GM12878 (cell line): ENCODE measurements at regions of chr21 and their contacts with region 1.

Region 1: GRCh38 chr21:14602382-14602958 is 56.4 kb upstream of the SAMSN1 start:
- DNase-seq: no peak
- ATAC-seq: peak; percentile 90
- H3K4me3 ChIP-seq: peak overlapping the region; percentile 18; the same call in 1 of the 2 replicates
- H3K27ac ChIP-seq: no peak overlapping the region
- H3K4me1 ChIP-seq: peaks cover 3% of the 10 kb centered on the region; the same call in 1 of the 2 replicates
- H3K27me3 ChIP-seq: no peaks in the 10 kb centered on the region
- CTCF ChIP-seq: no peak
- EP300 ChIP-seq: no peak
- POLR2A ChIP-seq: no peak
- RAD21 ChIP-seq: no peak

Region 2: DNA sequence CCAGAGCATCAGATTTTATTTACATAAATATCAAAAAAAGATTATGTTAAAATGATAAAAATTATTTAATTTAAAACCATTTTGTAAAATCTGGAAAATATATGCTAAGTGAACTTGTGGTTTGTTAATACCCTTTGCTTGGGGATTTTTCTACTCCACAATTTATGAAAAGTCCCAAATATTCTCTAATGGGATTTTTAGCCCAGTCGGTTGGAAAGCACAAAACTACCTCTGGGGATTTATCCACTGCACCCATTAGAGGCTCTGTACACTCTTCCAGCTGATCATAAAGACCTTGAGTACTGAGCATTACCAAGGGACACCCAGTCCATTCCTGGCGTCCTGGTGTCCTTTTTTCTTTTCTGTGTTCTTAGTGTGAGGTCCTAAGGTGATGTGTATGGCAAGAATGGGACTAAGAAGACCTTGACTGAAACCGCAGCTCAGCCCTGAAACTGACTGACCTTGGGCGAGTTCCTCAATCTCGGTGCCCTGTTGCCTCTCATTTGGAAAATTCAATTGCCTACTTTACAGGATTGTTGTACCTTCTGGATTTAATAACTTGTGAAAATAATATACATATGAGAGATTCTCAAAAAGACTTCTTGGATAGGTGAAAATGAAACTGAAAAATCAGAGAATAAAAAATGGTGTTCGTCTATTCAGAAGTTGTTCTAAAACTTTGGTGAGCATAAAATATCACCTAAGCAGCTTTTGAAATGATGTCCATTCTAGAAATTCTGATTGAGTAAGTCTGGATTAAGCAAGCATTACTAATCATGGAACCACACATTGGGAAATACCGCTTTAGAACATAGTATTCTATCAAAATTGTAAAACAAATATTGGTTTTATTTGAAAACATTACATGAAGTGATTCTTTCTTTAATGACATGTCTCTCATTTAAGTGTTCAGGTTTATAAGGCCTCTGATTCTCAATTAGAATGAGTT is 34.9 kb before region 1 on chr21:
- CTCF ChIA-PET with region 1: interaction called, 3 read pairs
- POLR2A ChIA-PET with region 1: no interaction called
- RAD21 ChIA-PET with region 1: interaction called, 10 read pairs
- SMC1A ChIA-PET with region 1: interaction called, 17 read pairs
- in situ Hi-C with region 1: no loop called
- intact Hi-C with region 1: no loop called
- DNase-seq: no peak
- ATAC-seq: peak; percentile 81
- H3K4me3 ChIP-seq: peak overlapping the region; percentile 42
- H3K27ac ChIP-seq: peak overlapping the region; percentile 69
- H3K4me1 ChIP-seq: peaks cover 22% of the 10 kb centered on the region
- H3K27me3 ChIP-seq: no peaks in the 10 kb centered on the region
- CTCF ChIP-seq: no peak
- EP300 ChIP-seq: no peak
- POLR2A ChIP-seq: no peak
- RAD21 ChIP-seq: no peak

Region 3: DNA sequence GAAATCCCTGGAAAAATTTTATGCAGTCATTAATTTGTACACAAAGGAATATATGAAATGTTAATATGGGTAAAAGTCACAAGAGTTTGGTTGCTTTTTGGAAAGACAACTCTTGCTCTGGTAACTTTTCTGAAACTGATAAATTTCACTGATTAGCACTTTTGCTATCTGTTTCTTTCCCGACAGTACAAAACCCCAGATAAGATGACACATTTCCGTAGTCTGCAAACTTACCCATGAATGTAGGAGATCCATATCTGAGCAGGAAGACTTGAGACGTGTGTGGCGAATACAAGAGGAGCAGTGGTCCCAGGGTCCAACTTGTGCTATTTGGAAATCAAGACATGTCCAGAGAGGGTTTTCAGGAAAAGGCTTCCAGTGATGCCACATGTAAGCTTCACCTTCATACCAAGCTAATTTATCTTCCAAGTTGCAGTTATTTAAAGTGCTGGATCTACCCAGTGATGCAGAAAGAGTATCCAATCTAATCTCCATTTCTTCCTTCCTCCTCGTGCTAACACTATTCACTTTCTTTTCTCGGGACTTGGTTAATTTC is 20.5 kb before region 1 on chr21:
- CTCF ChIA-PET with region 1: no interaction called
- POLR2A ChIA-PET with region 1: interaction called, 11 read pairs
- RAD21 ChIA-PET with region 1: interaction called, 4 read pairs
- SMC1A ChIA-PET with region 1: no interaction called
- in situ Hi-C with region 1: no loop called
- intact Hi-C with region 1: no loop called
- DNase-seq: no peak
- ATAC-seq: no peak
- H3K4me3 ChIP-seq: no peak overlapping the region
- H3K27ac ChIP-seq: no peak overlapping the region
- H3K4me1 ChIP-seq: no peaks in the 10 kb centered on the region
- H3K27me3 ChIP-seq: no peaks in the 10 kb centered on the region
- CTCF ChIP-seq: no peak
- EP300 ChIP-seq: no peak
- POLR2A ChIP-seq: no peak
- RAD21 ChIP-seq: no peak

Region 4: GRCh38 chr21:14591882-14592281 is 10.6 kb before region 1 on chr21:
- CTCF ChIA-PET with region 1: interaction called, 10 read pairs
- POLR2A ChIA-PET with region 1: interaction called, 9 read pairs
- RAD21 ChIA-PET with region 1: interaction called, 28 read pairs
- SMC1A ChIA-PET with region 1: interaction called, 61 read pairs
- in situ Hi-C with region 1: no loop called
- intact Hi-C with region 1: no loop called
- DNase-seq: no peak
- ATAC-seq: peak; percentile 79
- H3K4me3 ChIP-seq: no peak overlapping the region
- H3K27ac ChIP-seq: no peak overlapping the region
- H3K4me1 ChIP-seq: peaks cover 9% of the 10 kb centered on the region; the same call in 1 of the 2 replicates
- H3K27me3 ChIP-seq: no peaks in the 10 kb centered on the region
- CTCF ChIP-seq: no peak
- EP300 ChIP-seq: peak in 1 of 2 experiments; percentile 16; a peak in 2 of 4 replicates
- POLR2A ChIP-seq: no peak
- RAD21 ChIP-seq: no peak

Region 5: DNA sequence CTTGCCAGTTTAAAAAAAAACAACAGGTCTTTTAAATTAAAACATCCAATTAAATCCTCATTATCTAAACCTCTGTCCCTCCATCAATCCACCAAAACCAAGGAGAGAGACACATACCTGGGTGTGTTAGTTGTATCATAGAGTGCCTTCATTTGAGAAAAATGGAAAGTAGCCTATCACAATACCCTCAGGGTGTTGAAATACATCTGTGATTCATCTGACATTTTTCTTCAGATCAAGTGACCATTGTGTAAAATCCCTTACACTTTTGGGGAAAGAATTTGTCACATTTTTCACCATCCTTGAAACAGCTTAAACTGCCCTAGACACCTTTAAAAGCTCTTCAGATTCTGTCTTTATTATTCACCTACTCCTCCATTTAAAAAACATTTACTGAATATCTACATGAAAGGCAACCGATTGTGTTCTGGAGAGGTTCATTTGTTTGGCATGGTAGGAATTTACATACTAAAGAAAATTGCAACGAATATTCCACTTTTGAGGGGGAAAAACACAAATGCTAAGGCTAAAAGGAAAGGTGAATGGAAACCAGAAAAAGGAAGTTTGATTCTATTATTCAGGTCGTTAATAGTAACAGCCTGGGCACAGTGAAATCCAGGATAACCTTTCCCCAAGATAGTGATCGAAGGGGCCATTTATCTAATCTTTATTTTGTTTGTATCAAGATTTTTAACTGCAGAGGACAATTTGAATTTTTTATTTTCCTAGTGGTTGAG is 14.0 kb after region 1 on chr21:
- CTCF ChIA-PET with region 1: interaction called, 4 read pairs
- POLR2A ChIA-PET with region 1: no interaction called
- RAD21 ChIA-PET with region 1: interaction called, 3 read pairs
- SMC1A ChIA-PET with region 1: interaction called, 25 read pairs
- in situ Hi-C with region 1: no loop called
- intact Hi-C with region 1: no loop called
- DNase-seq: no peak
- ATAC-seq: no peak
- H3K4me3 ChIP-seq: no peak overlapping the region
- H3K27ac ChIP-seq: no peak overlapping the region
- H3K4me1 ChIP-seq: no peaks in the 10 kb centered on the region
- H3K27me3 ChIP-seq: no peaks in the 10 kb centered on the region
- CTCF ChIP-seq: no peak
- EP300 ChIP-seq: no peak
- POLR2A ChIP-seq: no peak
- RAD21 ChIP-seq: no peak